ENCODE measurements at regions of chrX and their contacts with region 1.

Region 1: DNA sequence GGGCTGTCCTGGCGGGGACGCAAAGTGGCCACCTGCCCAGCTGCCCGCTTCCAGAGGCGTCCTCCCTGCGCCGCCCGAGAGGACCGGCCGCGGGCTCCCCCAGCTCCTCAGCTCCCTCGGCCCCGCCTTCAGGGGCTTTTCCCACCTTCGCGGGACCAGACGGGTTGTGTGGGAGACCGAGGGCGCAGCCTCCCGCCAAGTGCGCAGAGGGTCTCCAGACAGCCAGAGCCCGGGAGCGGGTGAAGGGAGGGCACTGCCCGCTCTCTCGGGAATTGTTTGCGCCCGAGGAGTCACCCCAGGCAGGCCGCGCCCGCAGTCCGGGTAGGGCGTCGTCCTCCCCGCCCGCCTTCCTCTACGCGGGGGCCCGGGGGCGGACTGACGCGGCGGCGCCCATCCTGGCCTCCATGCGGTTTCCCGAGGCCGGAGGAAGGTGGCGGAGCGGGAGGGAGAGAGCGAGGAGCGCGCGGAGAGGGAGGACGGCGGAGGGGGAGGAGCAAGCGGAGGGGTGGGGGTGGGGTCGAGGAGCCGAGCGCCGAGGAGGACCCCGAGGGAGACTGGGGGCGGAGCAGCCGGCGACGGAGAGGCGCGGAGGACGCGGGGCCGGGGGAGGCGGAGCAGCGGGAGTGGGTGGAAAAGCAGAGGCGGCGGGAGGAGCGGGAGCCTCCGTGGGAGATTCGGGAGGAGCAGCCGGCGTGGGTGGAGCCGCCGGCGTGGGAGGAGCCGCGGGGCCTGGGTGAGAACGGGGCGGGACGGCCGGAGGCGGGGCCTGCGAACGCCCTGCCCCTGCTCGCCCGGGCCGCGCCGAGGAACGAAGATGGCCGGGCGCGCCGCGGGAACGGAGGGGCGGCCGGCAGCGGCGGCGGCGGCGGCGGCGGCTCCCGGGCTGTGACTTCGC is 47.6 kb downstream of the CLDN34 start:
- DNase-seq: peak; percentile 70 to 97 (median 76)

Region 2: DNA sequence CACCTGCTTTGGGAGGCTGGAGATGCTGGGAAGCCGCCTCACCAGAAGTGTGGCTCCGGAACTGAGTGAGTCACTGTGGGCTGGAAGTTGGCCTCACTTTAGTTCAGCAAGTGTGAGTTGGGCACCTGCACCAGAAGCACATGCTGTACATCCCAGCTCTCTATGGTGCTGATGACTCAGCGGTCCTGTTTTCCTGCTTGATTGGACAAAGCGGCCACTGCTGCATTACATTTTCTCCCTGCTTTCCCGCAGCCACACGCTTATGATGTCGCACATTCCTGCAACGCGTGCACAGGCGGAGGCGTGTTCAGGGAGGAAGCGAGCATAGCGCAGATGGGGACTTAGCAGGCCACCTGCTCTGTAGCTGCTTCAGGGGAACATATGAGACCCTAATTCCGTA is 74.3 kb before region 1 on chrX:
- intact Hi-C with region 1: no loop called
- DNase-seq: peak in 9 of 10 donors; percentile 19 to 92 (median 58)

Region 3: DNA sequence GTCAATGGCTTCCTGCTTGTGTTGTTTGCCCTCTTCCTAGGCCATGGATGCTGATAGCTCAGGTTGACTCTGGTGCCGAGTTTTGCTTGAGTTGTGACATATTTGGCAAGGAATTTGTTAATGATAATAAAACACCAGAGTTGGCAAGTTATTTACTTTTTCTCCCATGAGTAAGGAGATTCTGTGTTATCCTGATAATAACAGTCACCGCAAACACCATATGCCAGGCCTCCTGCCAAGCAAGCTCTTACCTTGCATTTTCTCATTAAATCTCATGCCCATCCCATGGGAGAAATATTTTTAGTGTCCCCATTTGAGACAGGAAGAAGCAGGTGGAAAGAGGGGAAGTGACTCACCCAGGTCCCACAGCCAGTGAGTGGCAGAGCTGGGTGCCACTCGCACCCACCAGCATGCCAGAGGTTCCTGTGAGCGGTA is 74.7 kb after region 1 on chrX:
- intact Hi-C with region 1: loop called (anchors 10 kb)
- DNase-seq: no peak

Region 4: GRCh38 chrX:10111364-10112148 is 96.8 kb after region 1 on chrX:
- intact Hi-C with region 1: loop called (anchors 5 kb)
- DNase-seq: peak in 2 of 10 donors; percentile 76 to 82

Measured in posterior cingulate gyrus (tissue), 11 donors.